ENCODE measurements at regions of chr3 and their contacts with region 1.

Region 1: DNA sequence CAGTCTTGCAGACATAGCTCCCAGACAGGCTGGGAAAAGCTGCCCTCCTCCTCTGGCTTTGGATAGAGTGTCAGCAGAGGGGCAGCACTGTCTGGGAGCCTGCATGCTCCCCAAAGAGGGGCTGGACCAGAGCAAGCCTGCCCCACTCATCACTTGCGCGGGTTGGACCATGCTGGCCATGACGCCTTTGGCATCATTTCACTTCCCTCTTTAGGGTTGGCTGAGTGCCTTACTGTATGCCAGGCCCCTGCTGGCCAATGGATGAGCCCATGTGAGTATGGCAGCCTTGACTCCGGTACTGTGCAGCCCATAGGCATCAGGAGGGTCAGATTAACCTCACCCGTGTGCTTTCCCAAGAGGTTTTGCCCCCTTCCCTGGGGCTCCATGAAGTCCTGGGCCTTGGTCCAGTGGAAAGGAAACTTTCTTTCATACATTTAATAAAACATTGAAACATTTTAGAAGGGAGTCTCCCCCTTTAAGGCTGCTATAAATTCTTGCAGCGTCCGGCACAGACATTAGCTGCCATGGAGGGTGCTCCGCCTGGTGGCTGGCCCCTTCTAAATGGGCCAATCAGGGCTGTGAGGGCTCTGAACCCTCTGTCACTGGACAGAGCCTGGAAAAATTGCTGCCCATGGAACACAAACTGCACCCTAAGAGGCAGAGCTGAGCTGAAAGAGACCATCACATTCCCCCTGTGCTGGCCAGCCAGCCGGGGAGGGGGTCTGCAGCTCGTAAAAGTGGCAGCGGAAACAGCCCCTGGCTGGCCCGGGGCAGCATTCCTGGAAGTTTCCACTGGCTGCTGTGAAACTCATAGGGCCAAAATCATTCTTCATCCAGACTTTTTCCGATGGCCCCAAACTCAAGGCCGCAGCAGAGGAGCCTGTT is 20.8 kb upstream of the DUSP7 start:
- DNase-seq: no peak
- ATAC-seq: peak; percentile 64
- H3K4me3 ChIP-seq: no peak overlapping the region
- H3K4me3 Mint-ChIP-seq: no peak overlapping the region
- H3K27ac ChIP-seq: no peak overlapping the region
- H3K27ac Mint-ChIP-seq: no peak overlapping the region
- H3K4me1 ChIP-seq: no peaks in the 10 kb centered on the region
- H3K4me1 Mint-ChIP-seq: no peaks in the 10 kb centered on the region
- H3K27me3 ChIP-seq: no peaks in the 10 kb centered on the region
- H3K27me3 Mint-ChIP-seq: no peaks in the 10 kb centered on the region

Region 2: GRCh38 chr3:52041118-52041731 is 35.9 kb before region 1 on chr3:
- CTCF ChIA-PET with region 1: no interaction called
- POLR2A ChIA-PET with region 1: no interaction called
- intact Hi-C with region 1: loop called in 1 of 2 experiments (anchors 5 kb)
- DNase-seq: no peak
- ATAC-seq: no peak
- H3K4me3 ChIP-seq: no peak overlapping the region
- H3K4me3 Mint-ChIP-seq: no peak overlapping the region
- H3K27ac ChIP-seq: no peak overlapping the region
- H3K27ac Mint-ChIP-seq: peak overlapping the region in 3 of 9 donors; percentile 28 to 72 (median 41)
- H3K4me1 ChIP-seq: no peaks in the 10 kb centered on the region
- H3K4me1 Mint-ChIP-seq: peaks cover 0 to 34% (median 27%) of the 10 kb centered on the region in 7 donors
- H3K27me3 ChIP-seq: no peaks in the 10 kb centered on the region
- H3K27me3 Mint-ChIP-seq: peaks cover 0 to 9% (median 0%) of the 10 kb centered on the region in 5 donors

Measured in naive thymus-derived CD4-positive, alpha-beta T cell (primary cell).